ENCODE measurements at regions of chr3 and their contacts with region 1.

Region 1: GRCh38 chr3:5729852-5730251 is 542.3 kb downstream of the EDEM1 start:
- DNase-seq: no peak
- ATAC-seq: no peak
- H3K4me3 ChIP-seq: no peak overlapping the region
- H3K27ac ChIP-seq: no peak overlapping the region
- H3K4me1 ChIP-seq: no peaks in the 10 kb centered on the region
- H3K27me3 ChIP-seq: no peaks in the 10 kb centered on the region
- CTCF ChIP-seq: no peak
- POLR2A ChIP-seq: no peak

Region 2: GRCh38 chr3:5687230-5687629 is 42.6 kb before region 1 on chr3:
- intact Hi-C with region 1: no loop called
- DNase-seq: no peak
- ATAC-seq: no peak
- H3K4me3 ChIP-seq: no peak overlapping the region
- H3K27ac ChIP-seq: no peak overlapping the region
- H3K4me1 ChIP-seq: no peaks in the 10 kb centered on the region
- H3K27me3 ChIP-seq: no peaks in the 10 kb centered on the region
- CTCF ChIP-seq: no peak
- POLR2A ChIP-seq: no peak

Region 3: GRCh38 chr3:5787861-5788488 is 58.1 kb after region 1 on chr3:
- intact Hi-C with region 1: loop called in 1 of 10 experiments (anchors 10 kb)
- DNase-seq: peak in 4 of 5 donors; percentile 19 to 31 (median 26)
- ATAC-seq: peak in 2 of 4 donors; percentile 48 to 66
- H3K4me3 ChIP-seq: no peak overlapping the region
- H3K27ac ChIP-seq: no peak overlapping the region
- H3K4me1 ChIP-seq: no peaks in the 10 kb centered on the region
- H3K27me3 ChIP-seq: no peaks in the 10 kb centered on the region
- CTCF ChIP-seq: peak in 1 of 12 donors; percentile 11
- POLR2A ChIP-seq: no peak